ENCODE measurements at regions of chr15 and their contacts with region 1.

Region 1: GRCh38 chr15:51243759-51244158 is 94.6 kb downstream of the CYP19A1 start:
- DNase-seq: no peak
- H3K4me3 Mint-ChIP-seq: no peak overlapping the region
- H3K27ac Mint-ChIP-seq: peak overlapping the region; percentile 56
- H3K4me1 Mint-ChIP-seq: peaks cover 25% of the 10 kb centered on the region
- H3K27me3 Mint-ChIP-seq: peaks cover 13% of the 10 kb centered on the region

Region 2: DNA sequence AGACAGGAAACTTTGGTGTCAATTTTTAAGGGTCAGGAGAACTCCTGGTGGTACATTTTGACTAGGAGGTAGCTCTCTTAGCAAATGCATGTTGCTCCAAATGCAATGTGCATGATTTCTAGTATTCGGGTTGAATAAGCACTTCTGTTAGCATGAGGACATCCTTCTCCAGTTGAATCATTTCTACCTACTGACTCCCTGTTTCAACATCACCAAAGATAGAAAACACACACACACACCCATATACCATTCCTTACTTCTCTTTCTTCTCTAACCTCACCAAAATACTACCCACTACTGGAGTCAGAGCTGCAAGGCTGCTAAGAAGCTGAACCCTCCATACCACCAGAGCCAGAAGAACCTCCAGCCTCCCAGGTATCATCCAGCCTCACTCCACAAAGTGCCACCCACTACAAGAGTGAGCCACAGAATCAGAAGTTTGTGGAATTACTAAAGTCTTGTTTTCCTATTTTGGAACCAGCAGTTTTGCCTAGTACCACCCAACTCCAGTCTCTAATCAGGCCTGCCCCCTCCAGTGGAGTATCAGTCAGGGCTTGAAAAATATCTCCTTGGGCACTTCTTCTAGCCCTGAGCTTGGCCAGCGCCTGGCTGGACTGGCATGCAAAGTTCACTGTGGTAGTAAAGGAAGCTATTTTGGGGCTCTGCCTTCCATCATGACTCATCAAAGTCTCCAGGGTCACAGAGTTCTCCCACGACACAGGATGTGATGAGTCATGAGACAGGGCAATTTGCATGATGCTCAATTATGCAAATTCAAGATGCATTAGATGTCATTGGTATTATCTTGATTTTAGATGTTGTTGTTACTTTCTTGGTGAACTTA is 15.6 kb before region 1 on chr15:
- intact Hi-C with region 1: loop called (anchors 1 kb)
- DNase-seq: peak; percentile 75
- H3K4me3 Mint-ChIP-seq: peak overlapping the region; percentile 4
- H3K27ac Mint-ChIP-seq: peak overlapping the region; percentile 51
- H3K4me1 Mint-ChIP-seq: peaks cover 15% of the 10 kb centered on the region
- H3K27me3 Mint-ChIP-seq: no peaks in the 10 kb centered on the region